Cardiac septum (tissue), 1 donor: ENCODE measurements at regions of chr5 and their contacts with region 1.

Region 1: GRCh38 chr5:134225618-134226440 is at the start of gene PPP2CA:
- DNase-seq: peak; percentile 100
- total RNA-seq, gene PPP2CA: 214 TPM

Region 2: GRCh38 chr5:134209477-134210240 is 16.2 kb before region 1 on chr5:
- intact Hi-C with region 1: loop called (anchors 1 kb)
- DNase-seq: no peak